Activated CD4-positive, alpha-beta T cell treated with anti-CD3 and anti-CD28 coated beads for 36 hours (primary cell): ENCODE measurements at regions of chr9 and their contacts with region 1.

Region 1: GRCh38 chr9:34665381-34666250 is 3.2 kb upstream of the CCL27 start:
- DNase-seq: peak; percentile 93
- ATAC-seq: peak; percentile 75
- H3K4me3 Mint-ChIP-seq: peak overlapping the region; percentile 77
- H3K27ac Mint-ChIP-seq: peak overlapping the region; percentile 87
- H3K4me1 Mint-ChIP-seq: peaks cover 33% of the 10 kb centered on the region
- H3K27me3 Mint-ChIP-seq: no peaks in the 10 kb centered on the region

Region 2: DNA sequence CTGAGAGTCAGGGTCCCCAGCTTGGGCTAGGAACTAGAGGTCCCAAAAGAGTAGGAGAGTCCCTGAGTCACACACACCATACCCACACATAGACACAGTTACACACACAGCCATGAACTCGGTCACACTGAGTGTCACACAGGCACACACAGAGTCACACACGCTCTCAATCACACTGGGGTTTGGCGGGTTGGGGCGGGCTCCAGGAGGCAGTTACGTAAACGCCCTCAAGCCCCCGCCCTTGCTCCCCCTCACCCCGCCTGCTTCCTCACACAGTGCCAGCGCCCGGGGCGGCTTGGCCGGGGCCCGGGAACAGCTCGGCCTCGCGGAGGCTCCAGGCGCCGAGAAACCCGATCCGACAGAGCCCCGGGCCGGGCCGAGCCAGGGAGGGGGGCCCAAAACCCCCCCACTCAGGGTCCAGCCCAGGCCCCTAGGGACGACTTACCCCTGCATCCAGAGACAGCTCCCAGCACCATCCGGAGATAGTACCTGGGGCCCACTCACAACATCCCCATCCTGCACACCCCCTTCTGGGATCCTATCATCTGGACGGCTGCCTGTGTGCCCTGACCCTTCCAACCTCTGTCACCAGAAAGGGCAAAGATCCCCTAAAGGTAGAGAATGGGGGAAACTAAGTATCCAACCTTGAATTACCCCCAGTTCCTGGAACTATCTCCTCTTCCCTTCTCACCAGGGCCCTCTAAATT is 72.6 kb before region 1 on chr9:
- CTCF ChIA-PET with region 1: no interaction called
- POLR2A ChIA-PET with region 1: no interaction called
- intact Hi-C with region 1: no loop called
- DNase-seq: no peak
- ATAC-seq: no peak
- H3K4me3 Mint-ChIP-seq: no peak overlapping the region
- H3K27ac Mint-ChIP-seq: no peak overlapping the region
- H3K4me1 Mint-ChIP-seq: peaks cover 27% of the 10 kb centered on the region
- H3K27me3 Mint-ChIP-seq: peaks cover 55% of the 10 kb centered on the region

Region 3: DNA sequence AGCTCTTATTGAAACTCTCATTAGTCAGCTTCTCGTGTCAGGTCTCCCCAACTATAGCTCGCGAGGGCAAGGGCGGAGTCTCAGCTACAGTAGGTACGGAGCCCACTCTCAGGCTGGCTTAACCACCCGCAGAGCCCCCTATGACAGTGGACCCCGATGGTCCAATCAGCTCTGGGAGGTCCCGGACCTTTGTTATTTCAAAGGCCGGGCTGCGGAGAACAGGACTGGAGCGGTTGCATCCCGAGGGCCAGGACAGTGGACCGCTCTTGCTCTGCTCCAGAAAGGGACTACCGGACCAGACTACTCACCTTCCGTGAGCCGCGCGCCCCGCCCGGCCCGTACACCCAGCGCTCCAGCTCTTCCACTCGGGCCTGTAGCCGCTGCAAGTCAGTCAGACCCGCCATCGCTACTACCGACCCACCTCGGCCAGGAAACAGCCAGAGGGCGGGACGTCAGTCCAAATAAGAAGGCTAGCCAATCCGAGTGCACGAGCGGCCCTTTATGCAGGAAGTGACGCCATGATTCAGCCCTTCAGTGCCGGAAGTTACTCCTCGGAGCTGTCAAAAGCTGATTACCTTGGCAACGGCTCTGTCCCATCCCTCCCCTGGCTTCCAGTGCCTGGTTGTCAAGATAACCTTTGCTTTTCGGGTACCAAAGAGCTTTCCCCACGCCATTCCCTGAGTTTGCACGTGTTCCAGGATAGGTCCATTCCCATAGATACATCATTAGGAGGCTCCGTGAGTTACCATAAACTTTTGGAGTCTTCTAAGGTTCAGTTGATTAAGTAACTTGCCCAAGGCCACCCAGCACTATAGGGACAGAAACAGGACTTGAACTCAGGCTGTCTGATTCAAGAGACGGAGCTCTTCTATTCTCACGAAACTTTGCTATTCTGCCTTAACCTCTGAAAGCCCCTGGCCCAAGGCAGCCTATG is 45.3 kb before region 1 on chr9 and contains the start of gene DCTN3:
- CTCF ChIA-PET with region 1: interaction called, 7 read pairs
- POLR2A ChIA-PET with region 1: no interaction called
- intact Hi-C with region 1: loop called in 1 of 2 experiments (anchors 1 kb)
- DNase-seq: peak; percentile 95
- ATAC-seq: peak; percentile 99
- H3K4me3 Mint-ChIP-seq: peak within 1 kb of the TSS; percentile 88
- H3K27ac Mint-ChIP-seq: peak within 1 kb of the TSS; percentile 77
- H3K4me1 Mint-ChIP-seq: peaks cover 25% of the 10 kb centered on the region
- H3K27me3 Mint-ChIP-seq: peaks cover 25% of the 10 kb centered on the region
- total RNA-seq, gene DCTN3: 65.9 to 68.4 TPM